ENCODE measurements at regions of chr1 and their contacts with region 1.

Region 1: GRCh38 chr1:155172732-155173477 is at the start of gene KRTCAP2:
- DNase-seq: peak; percentile 93
- H3K4me3 ChIP-seq: peak within 1 kb of the TSS; percentile 99
- H3K27ac ChIP-seq: peak within 1 kb of the TSS; percentile 92
- H3K27me3 ChIP-seq: no peaks in the 10 kb centered on the region
- CTCF ChIP-seq: peak; percentile 96
- polyA plus RNA-seq, gene KRTCAP2: 102 and 131 TPM in 2 replicates

Region 2: DNA sequence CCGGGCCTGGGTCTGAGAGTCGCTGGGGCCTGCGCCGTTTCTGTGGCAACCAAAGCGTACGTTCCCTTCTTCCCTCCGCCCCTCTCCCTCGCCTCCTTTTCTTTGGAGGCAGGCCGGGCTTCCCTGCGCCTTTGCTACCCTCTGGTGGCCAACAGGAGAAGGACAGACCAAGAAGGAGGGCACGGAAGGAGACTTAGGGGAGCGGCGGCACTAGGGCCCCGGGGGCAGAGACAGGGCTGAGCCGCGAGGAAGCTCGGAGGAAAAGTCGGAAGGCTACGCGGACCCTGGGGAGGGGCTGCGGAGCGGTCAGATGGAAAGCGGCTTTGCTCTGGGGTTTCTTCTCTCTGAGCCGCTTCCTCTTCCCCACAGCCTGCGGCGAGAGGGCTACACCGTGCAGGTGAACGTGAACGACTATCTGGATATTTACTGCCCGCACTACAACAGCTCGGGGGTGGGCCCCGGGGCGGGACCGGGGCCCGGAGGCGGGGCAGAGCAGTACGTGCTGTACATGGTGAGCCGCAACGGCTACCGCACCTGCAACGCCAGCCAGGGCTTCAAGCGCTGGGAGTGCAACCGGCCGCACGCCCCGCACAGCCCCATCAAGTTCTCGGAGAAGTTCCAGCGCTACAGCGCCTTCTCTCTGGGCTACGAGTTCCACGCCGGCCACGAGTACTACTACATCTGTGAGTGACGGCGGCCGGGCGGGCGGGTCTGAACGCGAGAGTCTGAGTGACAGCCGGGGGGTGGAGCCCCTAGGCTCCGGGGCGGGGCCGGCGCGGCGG is 88.0 kb before region 1 on chr1:
- CTCF ChIA-PET with region 1: interaction called, 317 read pairs
- POLR2A ChIA-PET with region 1: interaction called, 8 read pairs
- DNase-seq: peak; percentile 86
- H3K4me3 ChIP-seq: peak overlapping the region; percentile 86
- H3K27ac ChIP-seq: peak overlapping the region; percentile 12
- H3K27me3 ChIP-seq: peaks cover 45% of the 10 kb centered on the region
- CTCF ChIP-seq: peak; percentile 92

Region 3: DNA sequence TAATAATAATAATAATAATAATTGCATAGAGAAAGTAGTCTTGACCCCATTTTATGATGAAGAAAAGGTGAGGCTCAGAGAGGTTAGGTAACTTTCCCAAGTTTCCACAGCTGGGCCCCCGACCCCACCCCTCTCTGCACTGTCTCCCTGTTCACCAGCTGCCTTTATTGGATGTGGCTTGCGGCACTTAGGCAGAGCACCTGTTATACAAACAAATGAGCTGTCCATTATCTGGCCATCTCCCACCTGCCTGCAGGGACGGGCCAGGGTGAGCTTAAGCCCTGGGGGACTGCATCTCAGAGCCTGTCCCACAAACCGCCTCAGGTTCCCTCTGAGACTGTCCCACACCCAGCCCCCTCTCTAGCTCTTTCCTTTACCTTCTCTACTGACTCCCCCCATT is 55.3 kb before region 1 on chr1:
- CTCF ChIA-PET with region 1: interaction called, 17 read pairs
- POLR2A ChIA-PET with region 1: no interaction called
- DNase-seq: no peak
- H3K4me3 ChIP-seq: no peak overlapping the region
- H3K27ac ChIP-seq: no peak overlapping the region
- H3K27me3 ChIP-seq: peaks cover 40% of the 10 kb centered on the region
- CTCF ChIP-seq: no peak

Region 4: GRCh38 chr1:155185351-155186066 is 12.6 kb after region 1 on chr1:
- CTCF ChIA-PET with region 1: interaction called, 16 read pairs
- POLR2A ChIA-PET with region 1: interaction called, 9 read pairs
- DNase-seq: no peak
- H3K4me3 ChIP-seq: no peak overlapping the region
- H3K27ac ChIP-seq: no peak overlapping the region
- H3K27me3 ChIP-seq: no peaks in the 10 kb centered on the region
- CTCF ChIP-seq: no peak

Region 5: GRCh38 chr1:155227261-155228095 is 54.6 kb after region 1 on chr1:
- CTCF ChIA-PET with region 1: interaction called, 12 read pairs
- POLR2A ChIA-PET with region 1: no interaction called
- DNase-seq: peak; percentile 98
- H3K4me3 ChIP-seq: peak overlapping the region; percentile 71
- H3K27ac ChIP-seq: peak overlapping the region; percentile 96
- H3K27me3 ChIP-seq: no peaks in the 10 kb centered on the region
- CTCF ChIP-seq: no peak; the same call in 1 of the 2 replicates

Measured in AG04450 (cell line).